ENCODE measurements at regions of chr1 and their contacts with region 1.

Region 1: GRCh38 chr1:226940029-226940805 is at the start of gene COQ8A:
- DNase-seq: peak; percentile 100
- H3K4me3 Mint-ChIP-seq: peak within 1 kb of the TSS; percentile 92
- H3K27ac Mint-ChIP-seq: peak within 1 kb of the TSS; percentile 93
- H3K4me1 Mint-ChIP-seq: peaks cover 43% of the 10 kb centered on the region
- H3K27me3 Mint-ChIP-seq: no peaks in the 10 kb centered on the region
- CTCF ChIP-seq: no peak
- total RNA-seq, gene COQ8A: 22.1 and 26.4 TPM in 2 replicates

Region 2: DNA sequence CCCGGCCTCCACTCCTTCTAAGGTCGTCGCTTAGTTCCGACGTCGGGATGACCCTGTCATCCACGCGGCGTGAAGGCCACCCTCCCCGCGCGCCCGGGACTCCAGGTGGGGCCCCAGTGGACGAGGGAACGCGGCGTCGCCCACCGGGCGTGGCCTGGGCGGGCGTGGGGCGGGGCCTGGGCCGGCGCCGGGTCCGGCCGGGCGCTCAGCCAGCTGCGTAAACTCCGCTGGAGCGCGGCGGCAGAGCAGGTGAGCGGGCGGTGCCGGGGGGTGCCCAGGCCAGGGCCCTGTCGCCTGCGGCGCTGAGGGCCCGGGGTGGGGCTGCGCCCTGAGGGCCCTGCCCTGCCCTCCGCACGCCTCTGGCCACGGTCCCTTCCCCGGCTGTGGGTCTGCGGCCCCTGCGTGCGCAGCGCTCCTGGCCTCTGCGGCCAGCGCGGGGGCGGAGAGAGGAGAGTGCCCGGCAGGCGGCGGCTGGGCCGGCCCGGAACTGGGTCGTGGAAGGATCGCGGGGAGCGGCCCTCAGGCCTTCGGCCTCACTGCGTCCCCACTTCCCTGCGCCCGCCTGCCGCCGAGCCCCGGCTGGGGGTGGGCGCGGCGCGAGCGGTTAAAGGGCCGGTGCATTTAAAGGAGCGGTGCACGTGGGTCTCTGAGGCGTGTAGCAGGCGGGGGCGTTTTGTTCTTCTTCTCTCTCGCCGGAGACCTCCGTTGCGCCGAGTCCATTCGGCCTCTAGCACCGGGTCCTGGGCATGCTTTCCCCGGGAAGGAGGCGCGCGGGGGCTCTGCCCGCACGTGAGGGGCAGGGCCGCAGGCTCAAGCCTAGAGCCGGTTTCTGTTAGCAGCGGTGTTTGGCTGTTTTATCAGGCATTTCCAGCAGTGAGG is 69.6 kb before region 1 on chr1 and contains the start of gene PSEN2:
- CTCF ChIA-PET with region 1: interaction called, 4 read pairs
- POLR2A ChIA-PET with region 1: interaction called, 40 read pairs
- intact Hi-C with region 1: loop called (anchors 5 kb)
- DNase-seq: peak; percentile 74
- H3K4me3 Mint-ChIP-seq: peak within 1 kb of the TSS; percentile 75
- H3K27ac Mint-ChIP-seq: peak within 1 kb of the TSS; percentile 79
- H3K4me1 Mint-ChIP-seq: peaks cover 45% of the 10 kb centered on the region
- H3K27me3 Mint-ChIP-seq: no peaks in the 10 kb centered on the region
- CTCF ChIP-seq: peak; percentile 53
- total RNA-seq, gene PSEN2: 31.3 and 31.8 TPM in 2 replicates

Region 3: GRCh38 chr1:226912587-226913176 is 27.5 kb before region 1 on chr1:
- CTCF ChIA-PET with region 1: interaction called, 3 read pairs
- POLR2A ChIA-PET with region 1: interaction called, 47 read pairs
- intact Hi-C with region 1: no loop called
- DNase-seq: no peak
- H3K4me3 Mint-ChIP-seq: no peak overlapping the region
- H3K27ac Mint-ChIP-seq: no peak overlapping the region
- H3K4me1 Mint-ChIP-seq: no peaks in the 10 kb centered on the region
- H3K27me3 Mint-ChIP-seq: no peaks in the 10 kb centered on the region
- CTCF ChIP-seq: no peak

Region 4: DNA sequence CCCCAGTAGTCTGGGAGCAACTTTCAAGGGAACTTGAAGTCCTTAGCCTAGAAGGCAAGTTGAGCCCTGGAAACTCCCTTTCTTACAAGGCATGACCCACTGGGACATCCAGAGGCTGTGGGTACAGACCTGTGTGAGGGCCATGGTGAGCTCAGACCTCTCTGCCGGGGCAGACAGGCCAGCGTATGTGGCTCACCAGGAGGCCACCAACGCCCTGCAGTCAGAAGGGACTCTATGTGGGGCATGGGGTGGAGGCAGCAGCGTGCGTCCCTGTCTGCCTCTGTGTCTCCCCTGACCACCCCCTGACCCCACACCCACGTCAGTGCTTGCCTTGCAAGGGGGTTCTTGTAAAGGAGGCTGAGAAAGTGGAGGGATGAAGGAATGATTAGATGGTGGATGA is 10.7 kb after region 1 on chr1:
- CTCF ChIA-PET with region 1: interaction called, 3 read pairs
- POLR2A ChIA-PET with region 1: interaction called, 27 read pairs
- intact Hi-C with region 1: no loop called
- DNase-seq: no peak
- H3K4me3 Mint-ChIP-seq: no peak overlapping the region
- H3K27ac Mint-ChIP-seq: peak overlapping the region; percentile 32
- H3K4me1 Mint-ChIP-seq: peaks cover 18% of the 10 kb centered on the region
- H3K27me3 Mint-ChIP-seq: no peaks in the 10 kb centered on the region
- CTCF ChIP-seq: no peak

Region 5: DNA sequence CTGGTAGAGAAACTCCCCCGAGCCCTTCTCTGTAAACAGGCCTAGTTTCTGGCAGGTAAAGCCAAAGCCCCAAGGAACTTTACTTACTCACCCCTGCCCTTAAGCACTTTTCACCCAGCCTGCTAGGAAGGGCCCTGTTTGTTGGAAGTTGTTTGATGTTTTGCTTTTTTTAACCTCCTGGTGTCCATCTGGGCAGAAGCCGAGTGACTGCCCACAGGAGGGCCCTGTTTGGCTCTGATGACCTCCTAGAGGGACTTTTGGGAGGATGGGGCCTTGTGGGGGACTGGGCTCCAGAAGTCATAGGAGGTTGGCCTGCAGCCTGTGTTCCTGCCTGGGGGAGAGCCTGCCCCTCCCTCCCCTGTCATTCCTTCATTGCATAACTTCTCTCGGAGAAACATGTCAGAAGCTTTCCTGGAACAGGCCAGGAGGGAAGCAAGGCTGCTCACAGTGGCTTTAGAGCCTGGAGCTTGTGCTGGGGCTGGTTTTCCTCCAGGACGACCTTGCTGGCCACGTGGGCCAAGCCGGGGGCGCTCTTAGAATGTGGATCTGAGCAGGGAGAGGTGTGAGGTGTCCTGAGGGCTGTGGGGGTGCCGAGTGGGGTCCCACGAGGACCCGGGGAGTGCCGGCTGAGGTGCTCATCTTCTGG is 33.8 kb after region 1 on chr1:
- CTCF ChIA-PET with region 1: interaction called, 4 read pairs
- POLR2A ChIA-PET with region 1: interaction called, 19 read pairs
- intact Hi-C with region 1: no loop called
- DNase-seq: peak; percentile 80
- H3K4me3 Mint-ChIP-seq: peak overlapping the region; percentile 38
- H3K27ac Mint-ChIP-seq: peak overlapping the region; percentile 96
- H3K4me1 Mint-ChIP-seq: peaks cover 24% of the 10 kb centered on the region
- H3K27me3 Mint-ChIP-seq: no peaks in the 10 kb centered on the region
- CTCF ChIP-seq: no peak

Region 6: DNA sequence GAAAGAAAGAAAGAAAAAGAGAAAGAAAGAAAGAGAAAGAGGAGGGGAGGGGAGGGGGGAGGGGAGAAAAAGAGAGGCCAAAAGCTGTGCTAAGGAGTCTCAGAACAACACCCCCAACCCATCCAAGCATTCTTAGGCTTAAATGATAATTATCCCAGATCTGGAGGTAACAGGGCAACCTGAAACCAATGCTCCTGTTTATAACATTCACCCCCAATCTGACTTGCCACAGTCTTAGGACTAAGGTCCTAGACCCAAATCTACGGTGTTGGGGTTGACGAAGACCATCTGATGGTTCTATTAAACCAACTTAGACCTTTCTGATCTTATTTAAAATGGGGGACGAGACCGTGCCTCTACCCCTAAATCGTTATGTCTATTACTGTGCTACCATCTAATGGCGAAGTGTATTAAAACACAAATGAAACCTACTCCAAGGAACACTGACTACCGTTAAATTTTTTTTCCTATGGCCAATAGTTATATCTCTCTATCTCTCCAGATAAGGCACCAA is 497.3 kb after region 1 on chr1:
- CTCF ChIA-PET with region 1: interaction called, 3 read pairs
- POLR2A ChIA-PET with region 1: interaction called, 3 read pairs
- intact Hi-C with region 1: loop called (anchors 1 kb)
- DNase-seq: peak; percentile 83
- H3K4me3 Mint-ChIP-seq: peak overlapping the region; percentile 58
- H3K27ac Mint-ChIP-seq: peak overlapping the region; percentile 53
- H3K4me1 Mint-ChIP-seq: peaks cover 16% of the 10 kb centered on the region
- H3K27me3 Mint-ChIP-seq: no peaks in the 10 kb centered on the region
- CTCF ChIP-seq: peak; percentile 80

Region 7: GRCh38 chr1:227895828-227896685 is 955.8 kb after region 1 on chr1:
- CTCF ChIA-PET with region 1: no interaction called
- POLR2A ChIA-PET with region 1: no interaction called
- intact Hi-C with region 1: no loop called
- DNase-seq: no peak
- H3K4me3 Mint-ChIP-seq: no peak overlapping the region
- H3K27ac Mint-ChIP-seq: no peak overlapping the region
- H3K4me1 Mint-ChIP-seq: peaks cover 18% of the 10 kb centered on the region
- H3K27me3 Mint-ChIP-seq: peaks cover 13% of the 10 kb centered on the region
- CTCF ChIP-seq: no peak